ENCODE measurements at regions of chr19 and their contacts with region 1.

Region 1: GRCh38 chr19:56538254-56538760 is 441 bp upstream of the ZFP28 start:
- DNase-seq: peak; percentile 73 to 92 (median 89)
- ATAC-seq: peak; percentile 90
- H3K4me3 ChIP-seq: peak overlapping the region; percentile 71 to 95
- H3K4me3 Mint-ChIP-seq: peak overlapping the region; percentile 92
- H3K27ac ChIP-seq: peak overlapping the region; percentile 72 to 87
- H3K27ac Mint-ChIP-seq: peak overlapping the region; percentile 95
- H3K4me1 ChIP-seq: peaks cover 12% of the 10 kb centered on the region
- H3K4me1 Mint-ChIP-seq: peaks cover 22% of the 10 kb centered on the region
- H3K27me3 ChIP-seq: no peaks in the 10 kb centered on the region
- H3K27me3 Mint-ChIP-seq: no peaks in the 10 kb centered on the region
- CTCF ChIP-seq: no peak

Region 2: GRCh38 chr19:56403764-56404704 is 134.3 kb before region 1 on chr19 and contains the start of gene ZNF583:
- CTCF ChIA-PET with region 1: no interaction called
- POLR2A ChIA-PET with region 1: no interaction called
- intact Hi-C with region 1: loop called in 1 of 2 experiments (anchors 1 kb)
- DNase-seq: peak; percentile 83 to 95 (median 91)
- ATAC-seq: peak; percentile 82
- H3K4me3 ChIP-seq: peak within 1 kb of the TSS; percentile 80 to 93
- H3K4me3 Mint-ChIP-seq: peak within 1 kb of the TSS; percentile 85
- H3K27ac ChIP-seq: peak within 1 kb of the TSS; percentile 83 to 99
- H3K27ac Mint-ChIP-seq: peak within 1 kb of the TSS; percentile 88
- H3K4me1 ChIP-seq: peaks cover 18% of the 10 kb centered on the region
- H3K4me1 Mint-ChIP-seq: peaks cover 32% of the 10 kb centered on the region
- H3K27me3 ChIP-seq: no peaks in the 10 kb centered on the region
- H3K27me3 Mint-ChIP-seq: no peaks in the 10 kb centered on the region
- CTCF ChIP-seq: no peak
- total RNA-seq, gene ZNF583: 1.3 to 2.4 TPM

Region 3: GRCh38 chr19:56477429-56478338 is 60.6 kb before region 1 on chr19:
- CTCF ChIA-PET with region 1: interaction called, 3 read pairs
- POLR2A ChIA-PET with region 1: no interaction called
- intact Hi-C with region 1: loop called (anchors 1 to 2 kb)
- DNase-seq: peak; percentile 21 to 84 (median 63)
- ATAC-seq: peak; percentile 66
- H3K4me3 ChIP-seq: peak overlapping the region; percentile 23 to 67
- H3K4me3 Mint-ChIP-seq: peak overlapping the region; percentile 96
- H3K27ac ChIP-seq: peak overlapping the region; percentile 56 to 84
- H3K27ac Mint-ChIP-seq: peak overlapping the region; percentile 95
- H3K4me1 ChIP-seq: no peaks in the 10 kb centered on the region
- H3K4me1 Mint-ChIP-seq: peaks cover 18% of the 10 kb centered on the region
- H3K27me3 ChIP-seq: no peaks in the 10 kb centered on the region
- H3K27me3 Mint-ChIP-seq: peaks cover 19% of the 10 kb centered on the region
- CTCF ChIP-seq: no peak

Region 4: GRCh38 chr19:56507446-56508289 is 30.6 kb before region 1 on chr19 and contains the start of gene ZNF471:
- CTCF ChIA-PET with region 1: no interaction called
- POLR2A ChIA-PET with region 1: no interaction called
- intact Hi-C with region 1: loop called (anchors 1 kb)
- DNase-seq: peak; percentile 62 to 96 (median 79)
- ATAC-seq: peak; percentile 98
- H3K4me3 ChIP-seq: peak within 1 kb of the TSS; percentile 39 to 73
- H3K4me3 Mint-ChIP-seq: no peak within 1 kb of the TSS
- H3K27ac ChIP-seq: peak within 1 kb of the TSS; percentile 76
- H3K27ac Mint-ChIP-seq: no peak within 1 kb of the TSS
- H3K4me1 ChIP-seq: peaks cover 8% of the 10 kb centered on the region
- H3K4me1 Mint-ChIP-seq: peaks cover 9% of the 10 kb centered on the region
- H3K27me3 ChIP-seq: peaks cover 0 to 3% of the 10 kb centered on the region in 2 experiments
- H3K27me3 Mint-ChIP-seq: peaks cover 3% of the 10 kb centered on the region
- CTCF ChIP-seq: no peak
- total RNA-seq, gene ZNF471: 0.67 to 0.71 TPM

Region 5: DNA sequence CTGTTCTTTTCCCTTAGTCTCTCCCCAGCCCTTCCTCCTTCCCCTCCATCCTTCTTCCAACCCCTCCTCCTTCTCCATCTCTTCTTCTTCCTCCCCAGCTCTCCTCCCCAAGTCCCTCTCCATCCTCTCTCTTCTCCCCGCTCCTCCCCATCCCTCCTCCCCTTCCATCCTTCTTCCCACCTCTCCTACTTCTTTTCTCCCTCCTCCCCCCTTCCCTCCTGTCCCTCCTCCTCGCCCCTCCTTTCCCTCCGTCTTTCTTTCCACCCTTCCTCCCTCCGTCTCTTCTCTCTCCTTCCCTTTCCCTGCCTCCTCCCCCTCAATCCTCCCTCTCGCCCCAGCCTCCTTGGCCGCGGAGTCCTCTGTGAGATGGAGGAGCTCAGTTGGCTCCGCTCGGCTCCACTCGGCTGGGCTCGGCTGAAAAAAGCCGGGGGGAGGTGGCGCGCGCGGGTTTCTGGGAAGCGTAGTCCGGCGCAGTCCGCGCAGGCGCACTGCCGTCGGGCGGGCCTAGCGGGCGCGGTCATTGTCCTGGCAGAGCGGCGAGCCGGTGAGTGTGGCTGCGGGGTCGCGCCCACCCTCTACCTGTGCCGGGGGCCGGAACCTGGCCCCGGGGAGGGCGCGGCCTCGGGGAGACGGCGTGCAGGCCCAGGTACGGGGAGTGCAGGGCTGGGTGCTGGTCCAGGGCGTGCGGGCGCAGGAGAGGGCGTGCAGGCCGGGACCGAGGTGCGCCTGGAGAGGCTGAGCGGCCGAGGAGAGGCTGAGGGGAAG is 56.7 kb after region 1 on chr19 and contains the start of gene ZNF71:
- CTCF ChIA-PET with region 1: no interaction called
- POLR2A ChIA-PET with region 1: no interaction called
- intact Hi-C with region 1: loop called (anchors 1 kb)
- DNase-seq: peak; percentile 72 to 91 (median 87)
- ATAC-seq: peak; percentile 96
- H3K4me3 ChIP-seq: peak within 1 kb of the TSS; percentile 45 to 72
- H3K4me3 Mint-ChIP-seq: peak within 1 kb of the TSS; percentile 91
- H3K27ac ChIP-seq: peak within 1 kb of the TSS; percentile 58 to 65
- H3K27ac Mint-ChIP-seq: peak within 1 kb of the TSS; percentile 91
- H3K4me1 ChIP-seq: peaks cover 18% of the 10 kb centered on the region
- H3K4me1 Mint-ChIP-seq: peaks cover 19% of the 10 kb centered on the region
- H3K27me3 ChIP-seq: no peaks in the 10 kb centered on the region
- H3K27me3 Mint-ChIP-seq: no peaks in the 10 kb centered on the region
- CTCF ChIP-seq: no peak
- total RNA-seq, gene ZNF71: 2.4 to 2.8 TPM

Region 6: DNA sequence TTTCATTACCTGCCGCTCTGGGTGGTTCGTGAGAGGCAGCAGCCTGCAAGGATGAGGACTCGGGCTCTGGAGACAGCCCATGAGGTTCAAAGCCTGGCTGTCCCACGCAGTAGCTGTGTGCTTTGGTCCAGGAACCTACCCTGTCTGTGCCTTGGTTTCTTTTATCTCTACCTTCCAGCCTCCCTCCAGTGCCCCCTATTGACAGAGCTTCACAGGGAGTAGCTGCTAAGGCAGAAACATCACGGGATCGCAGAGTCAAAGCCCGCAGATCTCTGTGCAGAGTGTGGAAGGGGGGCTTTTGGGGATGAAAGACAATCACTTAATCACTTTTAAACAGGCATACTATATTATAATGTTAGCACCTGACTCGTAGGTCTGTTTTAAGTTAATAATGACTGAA is 73.0 kb after region 1 on chr19:
- CTCF ChIA-PET with region 1: no interaction called
- POLR2A ChIA-PET with region 1: no interaction called
- intact Hi-C with region 1: no loop called
- DNase-seq: no peak
- ATAC-seq: no peak
- H3K4me3 ChIP-seq: no peak overlapping the region
- H3K4me3 Mint-ChIP-seq: no peak overlapping the region
- H3K27ac ChIP-seq: no peak overlapping the region
- H3K27ac Mint-ChIP-seq: no peak overlapping the region
- H3K4me1 ChIP-seq: no peaks in the 10 kb centered on the region
- H3K4me1 Mint-ChIP-seq: no peaks in the 10 kb centered on the region
- H3K27me3 ChIP-seq: no peaks in the 10 kb centered on the region
- H3K27me3 Mint-ChIP-seq: no peaks in the 10 kb centered on the region
- CTCF ChIP-seq: no peak

Region 7: DNA sequence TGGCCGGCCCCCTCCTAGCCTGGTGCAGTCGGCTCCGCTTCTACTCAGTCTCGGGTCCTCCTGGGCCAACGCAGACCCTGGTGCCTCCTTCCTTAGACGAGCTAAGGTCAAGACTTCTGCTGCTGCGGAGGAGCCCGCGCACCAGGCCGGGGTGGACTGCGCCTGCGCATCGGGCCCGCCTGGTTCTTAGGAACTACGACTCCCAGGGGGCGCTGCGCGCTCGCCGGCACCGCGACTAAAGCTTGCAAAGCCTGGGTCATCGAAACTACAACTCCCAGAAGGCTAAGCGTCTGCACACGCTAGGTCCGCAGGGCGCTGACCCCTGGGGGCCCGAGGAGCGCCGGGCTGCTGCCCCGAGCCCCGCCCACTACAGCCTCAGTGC is 133.3 kb after region 1 on chr19 and contains the start of gene ZNF835:
- CTCF ChIA-PET with region 1: no interaction called
- POLR2A ChIA-PET with region 1: no interaction called
- intact Hi-C with region 1: loop called in 1 of 2 experiments (anchors 2 kb)
- DNase-seq: peak; percentile 46 to 86 (median 79)
- ATAC-seq: peak; percentile 92
- H3K4me3 ChIP-seq: peak within 1 kb of the TSS; percentile 29 to 66
- H3K4me3 Mint-ChIP-seq: peak within 1 kb of the TSS; percentile 90
- H3K27ac ChIP-seq: peak within 1 kb of the TSS in 1 of 2 experiments; percentile 30
- H3K27ac Mint-ChIP-seq: peak within 1 kb of the TSS; percentile 67
- H3K4me1 ChIP-seq: peaks cover 11% of the 10 kb centered on the region
- H3K4me1 Mint-ChIP-seq: peaks cover 12% of the 10 kb centered on the region
- H3K27me3 ChIP-seq: no peaks in the 10 kb centered on the region
- H3K27me3 Mint-ChIP-seq: no peaks in the 10 kb centered on the region
- CTCF ChIP-seq: no peak
- total RNA-seq, gene ZNF835: 0.46 to 0.75 TPM